ENCODE measurements at regions of chr3 and their contacts with region 1.

Region 1: GRCh38 chr3:46378426-46378942 is 7.7 kb downstream of the CCR5 start:
- DNase-seq: no peak
- H3K4me3 ChIP-seq: no peak overlapping the region
- H3K27me3 ChIP-seq: peaks cover 12% of the 10 kb centered on the region
- CTCF ChIP-seq: peak; percentile 77

Region 2: GRCh38 chr3:46400000-46400734 is 21.7 kb after region 1 on chr3:
- CTCF ChIA-PET with region 1: interaction called, 11 read pairs
- POLR2A ChIA-PET with region 1: no interaction called
- DNase-seq: no peak
- H3K4me3 ChIP-seq: no peak overlapping the region
- H3K27me3 ChIP-seq: peaks cover 1% of the 10 kb centered on the region
- CTCF ChIP-seq: no peak